PC-9 (cell line): ENCODE measurements at regions of chr20 and their contacts with region 1.

Region 1: DNA sequence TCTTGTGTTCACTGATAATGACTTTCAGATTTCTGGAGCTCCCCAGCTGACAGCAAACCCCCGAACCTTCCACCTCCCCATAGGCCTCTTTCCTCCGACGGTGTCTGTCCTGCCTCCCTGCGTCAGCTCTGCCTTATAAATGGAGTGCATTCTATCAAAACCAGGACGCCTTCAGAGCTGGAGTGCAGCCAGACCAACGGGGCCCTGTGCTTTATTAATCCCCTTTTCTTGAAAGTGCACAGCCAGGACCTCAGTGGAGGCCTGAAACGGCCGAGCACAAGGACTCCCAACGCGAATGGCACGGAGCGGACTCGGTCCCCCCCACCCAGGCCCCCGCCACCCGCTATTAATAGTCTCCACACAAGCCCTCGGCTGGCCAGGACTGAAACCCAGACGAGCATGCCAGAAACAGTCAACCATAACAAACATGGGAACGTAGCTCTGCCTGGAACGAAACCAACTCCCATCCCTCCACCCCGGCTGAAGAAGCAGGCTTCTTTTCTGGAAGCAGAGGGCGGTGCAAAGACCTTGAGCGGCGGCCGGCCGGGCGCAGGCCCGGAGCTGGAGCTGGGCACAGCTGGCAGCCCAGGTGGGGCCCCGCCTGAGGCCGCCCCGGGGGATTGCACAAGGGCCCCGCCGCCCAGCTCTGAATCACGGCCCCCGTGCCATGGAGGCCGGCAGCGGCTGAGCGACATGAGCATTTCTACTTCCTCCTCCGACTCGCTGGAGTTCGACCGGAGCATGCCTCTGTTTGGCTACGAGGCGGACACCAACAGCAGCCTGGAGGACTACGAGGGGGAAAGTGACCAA is 42.3 kb upstream of the NAA20 start:
- DNase-seq: peak; percentile 84 to 93
- H3K4me3 ChIP-seq: peak overlapping the region; percentile 93
- H3K27ac ChIP-seq: peak overlapping the region; percentile 95
- H3K4me1 ChIP-seq: peaks cover 47% of the 10 kb centered on the region
- H3K27me3 ChIP-seq: no peaks in the 10 kb centered on the region
- CTCF ChIP-seq: no peak

Region 2: GRCh38 chr20:19260412-19261090 is 714.3 kb before region 1 on chr20:
- CTCF ChIA-PET with region 1: no interaction called
- POLR2A ChIA-PET with region 1: no interaction called
- intact Hi-C with region 1: no loop called
- DNase-seq: no peak
- H3K4me3 ChIP-seq: no peak overlapping the region
- H3K27ac ChIP-seq: no peak overlapping the region
- H3K4me1 ChIP-seq: no peaks in the 10 kb centered on the region
- H3K27me3 ChIP-seq: peaks cover 3% of the 10 kb centered on the region; the same call in 1 of the 2 replicates
- CTCF ChIP-seq: no peak

Region 3: GRCh38 chr20:19713822-19714578 is 260.8 kb before region 1 on chr20:
- CTCF ChIA-PET with region 1: interaction called, 10 read pairs
- POLR2A ChIA-PET with region 1: no interaction called
- intact Hi-C with region 1: no loop called
- DNase-seq: no peak
- H3K4me3 ChIP-seq: no peak overlapping the region
- H3K27ac ChIP-seq: no peak overlapping the region
- H3K4me1 ChIP-seq: no peaks in the 10 kb centered on the region
- H3K27me3 ChIP-seq: peaks cover 3% of the 10 kb centered on the region; the same call in 1 of the 2 replicates
- CTCF ChIP-seq: no peak

Region 4: DNA sequence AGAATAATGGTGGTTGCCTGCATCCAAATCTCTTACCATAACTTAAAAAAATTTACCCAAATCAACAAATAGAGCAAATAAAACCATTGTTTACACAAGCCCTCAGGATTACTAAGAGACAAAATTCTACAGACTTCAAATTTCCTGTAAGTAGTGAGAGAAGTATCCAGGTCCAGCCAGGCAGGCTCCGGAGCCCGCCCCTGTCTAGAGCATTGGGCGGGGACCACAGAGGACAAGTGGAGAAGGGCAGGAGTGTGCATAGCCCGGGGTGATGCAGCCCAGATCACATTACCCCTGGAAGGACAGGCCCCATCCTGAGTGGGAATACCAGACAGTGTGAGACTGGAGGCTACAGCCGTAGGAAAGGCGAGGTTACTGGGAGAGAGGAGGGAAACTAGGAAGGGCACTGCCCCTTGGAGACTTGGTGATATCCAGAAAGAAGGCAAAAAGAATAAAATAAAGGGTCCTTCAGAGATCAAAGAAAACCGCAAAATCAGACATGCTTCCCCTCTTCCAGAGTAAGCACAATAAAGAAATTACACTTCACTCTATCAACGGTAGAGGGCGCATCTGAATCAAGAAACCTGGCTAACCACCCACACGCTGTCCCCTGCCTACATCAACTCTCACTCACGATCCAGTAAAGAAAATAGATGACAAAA is 190.2 kb before region 1 on chr20:
- CTCF ChIA-PET with region 1: no interaction called
- POLR2A ChIA-PET with region 1: interaction called, 8 read pairs
- intact Hi-C with region 1: loop called (anchors 1 kb)
- DNase-seq: peak; percentile 90 to 92
- H3K4me3 ChIP-seq: peak overlapping the region; percentile 29; the same call in 1 of the 2 replicates
- H3K27ac ChIP-seq: peak overlapping the region; percentile 91
- H3K4me1 ChIP-seq: peaks cover 44% of the 10 kb centered on the region
- H3K27me3 ChIP-seq: no peaks in the 10 kb centered on the region
- CTCF ChIP-seq: peak; percentile 93

Region 5: GRCh38 chr20:19889011-19889953 is 85.5 kb before region 1 on chr20:
- CTCF ChIA-PET with region 1: interaction called, 3 read pairs
- POLR2A ChIA-PET with region 1: interaction called, 31 read pairs
- intact Hi-C with region 1: loop called (anchors 1 kb)
- DNase-seq: no peak
- H3K4me3 ChIP-seq: no peak overlapping the region
- H3K27ac ChIP-seq: no peak overlapping the region
- H3K4me1 ChIP-seq: peaks cover 25% of the 10 kb centered on the region
- H3K27me3 ChIP-seq: no peaks in the 10 kb centered on the region
- CTCF ChIP-seq: no peak

Region 6: DNA sequence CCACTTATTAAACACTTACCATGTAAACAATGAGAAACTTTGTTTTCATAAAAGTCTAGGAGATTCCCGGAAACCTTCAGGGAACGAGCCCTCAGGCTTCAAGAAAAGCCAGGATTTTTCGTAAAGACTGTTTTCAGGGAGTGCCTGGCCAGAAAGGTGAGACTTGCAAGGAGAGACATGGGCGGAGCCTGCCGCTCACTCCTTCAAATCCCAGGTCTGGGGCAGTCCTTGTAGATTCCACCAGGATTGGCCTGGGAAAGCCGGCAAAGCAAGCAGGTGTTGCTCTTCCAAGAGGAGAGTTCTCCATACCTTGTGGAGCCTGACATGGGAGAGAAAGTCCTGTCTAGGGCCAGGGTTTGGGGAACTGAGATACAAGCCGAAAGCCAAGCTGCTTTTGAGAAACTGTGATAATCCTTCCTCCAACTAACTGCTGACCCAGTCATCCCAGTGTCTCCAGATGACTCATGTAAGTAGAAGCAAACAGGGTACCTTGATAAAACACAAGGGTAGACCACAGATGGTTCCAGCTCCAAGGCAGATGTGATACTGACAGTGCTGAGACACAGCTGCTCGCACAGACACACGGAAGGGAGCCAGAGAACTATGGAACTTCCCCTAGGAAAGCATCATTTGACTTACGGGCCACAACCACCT is 27.1 kb before region 1 on chr20:
- CTCF ChIA-PET with region 1: no interaction called
- POLR2A ChIA-PET with region 1: interaction called, 12 read pairs
- intact Hi-C with region 1: no loop called
- DNase-seq: peak in 1 of 2 experiments; percentile 50
- H3K4me3 ChIP-seq: no peak overlapping the region
- H3K27ac ChIP-seq: no peak overlapping the region
- H3K4me1 ChIP-seq: peaks cover 9% of the 10 kb centered on the region; the same call in 1 of the 2 replicates
- H3K27me3 ChIP-seq: no peaks in the 10 kb centered on the region
- CTCF ChIP-seq: no peak

Region 7: GRCh38 chr20:20229595-20229994 is 254.8 kb after region 1 on chr20:
- CTCF ChIA-PET with region 1: no interaction called
- POLR2A ChIA-PET with region 1: no interaction called
- intact Hi-C with region 1: no loop called
- DNase-seq: no peak
- H3K4me3 ChIP-seq: no peak overlapping the region
- H3K27ac ChIP-seq: no peak overlapping the region
- H3K4me1 ChIP-seq: no peaks in the 10 kb centered on the region
- H3K27me3 ChIP-seq: peaks cover 71% of the 10 kb centered on the region
- CTCF ChIP-seq: no peak